ENCODE measurements at regions of chr9 and their contacts with region 1.

Region 1: GRCh38 chr9:134602547-134603309 is 38.9 kb upstream of the COL5A1 start:
- DNase-seq: peak; percentile 94
- H3K4me3 ChIP-seq: peak overlapping the region; percentile 7; the same call in 1 of the 2 replicates
- H3K27ac ChIP-seq: peak overlapping the region; percentile 97
- H3K27me3 ChIP-seq: no peaks in the 10 kb centered on the region
- CTCF ChIP-seq: no peak

Region 2: GRCh38 chr9:134624827-134625181 is 22.1 kb after region 1 on chr9:
- CTCF ChIA-PET with region 1: no interaction called
- POLR2A ChIA-PET with region 1: interaction called, 10 read pairs
- DNase-seq: no peak
- H3K4me3 ChIP-seq: no peak overlapping the region
- H3K27ac ChIP-seq: no peak overlapping the region
- H3K27me3 ChIP-seq: no peaks in the 10 kb centered on the region
- CTCF ChIP-seq: no peak

Region 3: GRCh38 chr9:134912126-134912968 is 309.6 kb after region 1 on chr9:
- CTCF ChIA-PET with region 1: no interaction called
- POLR2A ChIA-PET with region 1: no interaction called
- DNase-seq: no peak
- H3K4me3 ChIP-seq: no peak overlapping the region
- H3K27ac ChIP-seq: no peak overlapping the region
- H3K27me3 ChIP-seq: peaks cover 12% of the 10 kb centered on the region
- CTCF ChIP-seq: no peak

Measured in AG04450 (cell line).